ENCODE measurements at regions of chr19 and their contacts with region 1.

Region 1: DNA sequence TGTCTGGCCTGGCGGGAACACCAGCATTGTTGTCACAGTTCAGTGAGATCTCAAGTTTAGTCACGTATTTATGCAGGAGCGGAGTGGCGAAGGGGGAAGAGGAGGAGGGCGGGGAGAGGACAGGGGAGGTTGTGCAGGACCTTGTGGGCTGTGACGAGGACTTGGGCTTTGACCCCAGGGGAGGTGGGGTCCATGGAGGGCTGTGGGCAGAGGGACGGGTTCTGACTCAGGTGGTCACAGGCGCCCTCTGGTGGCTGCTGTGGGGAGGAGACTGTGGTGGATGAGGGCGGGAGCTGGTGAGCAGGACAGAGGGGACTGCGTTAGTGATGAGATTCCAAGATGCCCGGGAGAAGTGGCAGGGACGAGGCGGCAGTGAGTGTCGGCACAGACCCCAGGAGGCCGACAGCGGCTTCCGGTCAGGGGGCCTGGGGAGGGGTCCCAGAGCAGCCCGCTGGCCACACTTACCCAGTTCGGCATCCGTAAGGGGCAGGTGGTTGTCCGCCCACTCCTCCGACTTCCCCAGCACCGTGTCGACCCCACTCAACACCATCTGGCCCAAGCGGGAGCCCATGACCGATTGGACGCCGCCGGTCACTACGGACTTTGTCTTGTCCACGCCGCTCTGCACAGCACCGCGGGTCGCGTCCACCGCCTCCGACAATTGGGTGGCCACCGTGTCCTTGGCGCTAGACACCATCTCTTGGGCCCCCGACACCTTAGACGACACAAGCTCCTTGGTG is 15.7 kb downstream of the PLIN3 start:
- DNase-seq: peak; percentile 52 to 72 (median 66)
- H3K4me3 ChIP-seq: no peak overlapping the region
- H3K4me3 Mint-ChIP-seq: no peak overlapping the region
- H3K27ac ChIP-seq: no peak overlapping the region
- H3K27ac Mint-ChIP-seq: peak overlapping the region in 3 of 7 donors; percentile 30 to 47 (median 41)
- H3K4me1 ChIP-seq: no peaks in the 10 kb centered on the region
- H3K4me1 Mint-ChIP-seq: peaks cover 0 to 4% (median 2%) of the 10 kb centered on the region in 4 donors
- H3K27me3 ChIP-seq: no peaks in the 10 kb centered on the region
- H3K27me3 Mint-ChIP-seq: no peaks in the 10 kb centered on the region

Region 2: DNA sequence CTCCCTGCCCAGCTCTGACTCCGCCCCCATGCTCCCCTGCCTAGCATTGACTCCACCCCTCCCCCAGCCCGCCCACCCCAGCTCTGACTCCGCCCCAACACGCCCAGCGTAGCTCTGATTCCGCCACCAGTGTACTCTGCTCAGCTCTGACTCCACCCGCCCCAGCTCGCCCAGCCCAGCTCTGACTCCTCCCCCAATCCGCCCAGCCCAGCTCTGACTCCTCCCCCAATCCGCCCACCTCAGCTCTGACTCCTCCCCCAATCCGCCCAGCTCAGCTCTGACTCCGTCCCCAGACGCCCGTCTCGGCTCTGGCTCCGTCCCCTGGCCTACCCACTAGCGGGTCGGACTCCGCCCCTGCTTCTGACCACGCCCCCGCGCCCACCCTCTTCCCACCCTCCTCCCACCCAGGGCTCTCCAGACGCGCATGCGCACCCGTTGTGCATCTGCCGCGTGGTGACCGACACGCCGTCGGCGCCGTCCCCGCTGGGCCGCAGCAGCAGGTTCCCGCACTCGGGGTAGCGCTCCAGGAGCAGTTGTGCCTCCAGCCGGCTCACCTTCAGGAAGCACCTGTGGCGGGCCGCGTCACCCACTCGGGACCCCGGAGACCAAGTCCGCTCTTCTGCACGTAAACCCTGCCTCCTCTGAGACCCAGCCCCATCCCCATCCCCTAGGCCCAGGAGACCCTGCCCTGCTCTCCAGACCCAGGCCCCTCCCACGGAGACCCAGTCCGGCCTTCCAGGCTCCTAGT is 523.3 kb before region 1 on chr19:
- CTCF ChIA-PET with region 1: no interaction called
- POLR2A ChIA-PET with region 1: no interaction called
- intact Hi-C with region 1: no loop called
- DNase-seq: peak; percentile 88 to 93 (median 92)
- H3K4me3 ChIP-seq: peak overlapping the region; percentile 59 to 61
- H3K4me3 Mint-ChIP-seq: peak overlapping the region; percentile 77 to 91 (median 82)
- H3K27ac ChIP-seq: no peak overlapping the region
- H3K27ac Mint-ChIP-seq: peak overlapping the region; percentile 72 to 99 (median 89)
- H3K4me1 ChIP-seq: peaks cover 19% of the 10 kb centered on the region
- H3K4me1 Mint-ChIP-seq: peaks cover 8 to 29% (median 20%) of the 10 kb centered on the region in 4 donors
- H3K27me3 ChIP-seq: no peaks in the 10 kb centered on the region
- H3K27me3 Mint-ChIP-seq: peaks cover 0 to 3% of the 10 kb centered on the region in 2 donors

Region 3: GRCh38 chr19:4723367-4724187 is 128.1 kb before region 1 on chr19 and contains the start of gene DPP9:
- CTCF ChIA-PET with region 1: no interaction called
- POLR2A ChIA-PET with region 1: no interaction called
- intact Hi-C with region 1: no loop called
- DNase-seq: peak; percentile 98 to 99 (median 99)
- H3K4me3 ChIP-seq: peak within 1 kb of the TSS; percentile 89 to 96
- H3K4me3 Mint-ChIP-seq: peak within 1 kb of the TSS; percentile 90 to 97 (median 93)
- H3K27ac ChIP-seq: peak within 1 kb of the TSS; percentile 86
- H3K27ac Mint-ChIP-seq: peak within 1 kb of the TSS; percentile 95 to 100 (median 98)
- H3K4me1 ChIP-seq: peaks cover 36% of the 10 kb centered on the region
- H3K4me1 Mint-ChIP-seq: peaks cover 15 to 47% (median 31%) of the 10 kb centered on the region in 4 donors
- H3K27me3 ChIP-seq: no peaks in the 10 kb centered on the region
- H3K27me3 Mint-ChIP-seq: peaks cover 4 to 10% of the 10 kb centered on the region in 2 donors
- total RNA-seq, gene DPP9: 86.9 to 93.9 TPM

Region 4: GRCh38 chr19:4823577-4823976 is 28.1 kb before region 1 on chr19:
- CTCF ChIA-PET with region 1: interaction called, 22 read pairs
- POLR2A ChIA-PET with region 1: no interaction called
- intact Hi-C with region 1: no loop called
- DNase-seq: peak in 1 of 5 donors; percentile 20
- H3K4me3 ChIP-seq: no peak overlapping the region
- H3K4me3 Mint-ChIP-seq: no peak overlapping the region
- H3K27ac ChIP-seq: no peak overlapping the region
- H3K27ac Mint-ChIP-seq: peak overlapping the region in 2 of 7 donors; percentile 52 to 65
- H3K4me1 ChIP-seq: no peaks in the 10 kb centered on the region
- H3K4me1 Mint-ChIP-seq: peaks cover 4 to 10% (median 6%) of the 10 kb centered on the region in 4 donors
- H3K27me3 ChIP-seq: no peaks in the 10 kb centered on the region
- H3K27me3 Mint-ChIP-seq: no peaks in the 10 kb centered on the region